ENCODE measurements at regions of chr21 and their contacts with region 1.

Region 1: DNA sequence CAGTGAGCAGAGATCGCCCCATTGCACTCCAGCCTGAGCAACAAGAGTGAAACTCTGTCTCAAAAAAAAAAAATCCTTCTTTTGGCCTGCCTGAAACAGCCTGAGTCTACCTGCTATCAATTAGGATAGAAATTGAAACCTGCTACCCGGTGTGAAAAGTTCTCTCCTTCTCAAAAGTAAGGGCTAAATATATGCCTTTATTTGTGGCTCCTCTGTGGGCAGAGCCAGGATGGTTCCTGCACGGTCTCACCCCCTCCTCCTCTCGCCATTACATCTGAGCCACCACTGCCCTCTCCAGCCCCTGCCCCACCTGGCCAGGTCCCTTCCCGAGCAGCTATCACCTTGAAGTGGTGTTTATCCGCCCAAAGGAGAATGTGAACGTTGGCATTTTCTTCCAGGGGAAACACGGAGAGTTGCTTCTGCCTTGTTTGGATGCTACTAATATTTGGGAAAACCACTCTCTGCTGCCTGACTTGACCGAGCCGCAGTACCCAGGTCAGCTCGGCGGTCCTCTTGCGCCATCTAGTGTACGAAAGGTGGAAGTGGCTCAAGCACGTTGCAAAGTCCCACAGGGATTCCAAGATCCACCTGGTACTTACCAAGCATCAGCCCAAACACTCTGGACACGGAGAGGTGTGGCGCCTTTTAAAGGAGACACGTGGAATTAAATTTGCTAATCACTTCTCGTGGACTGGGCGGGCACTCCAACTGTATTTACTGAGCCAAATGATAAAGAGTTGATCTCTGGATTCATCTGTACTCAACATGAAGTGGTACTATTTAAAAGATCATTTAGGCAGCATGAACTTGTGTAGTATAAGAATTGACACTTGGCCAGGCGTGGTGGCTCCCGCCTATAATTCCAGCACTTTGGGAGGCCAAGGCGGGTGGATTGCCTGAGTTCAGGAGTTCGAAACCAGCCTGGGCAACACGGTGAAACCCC is 31.9 kb downstream of the SETD4 start:
- DNase-seq: peak; percentile 89
- H3K4me3 ChIP-seq: no peak overlapping the region
- H3K27ac ChIP-seq: no peak overlapping the region
- H3K4me1 ChIP-seq: peaks cover 0 to 6% (median 2%) of the 10 kb centered on the region in 6 donors
- H3K27me3 ChIP-seq: no peaks in the 10 kb centered on the region
- CTCF ChIP-seq: peak; percentile 84 to 95 (median 93)
- POLR2A ChIP-seq: no peak

Region 2: GRCh38 chr21:34693192-34693810 is 1335.1 kb before region 1 on chr21:
- intact Hi-C with region 1: loop called (anchors 5 kb)
- DNase-seq: no peak
- H3K4me3 ChIP-seq: no peak overlapping the region
- H3K27ac ChIP-seq: no peak overlapping the region
- H3K4me1 ChIP-seq: peaks cover 0 to 8% (median 3%) of the 10 kb centered on the region in 6 donors
- H3K27me3 ChIP-seq: peaks cover 0 to 21% (median 0%) of the 10 kb centered on the region in 7 donors
- CTCF ChIP-seq: peak; percentile 38 to 86 (median 80)
- POLR2A ChIP-seq: no peak

Region 3: GRCh38 chr21:34745557-34746255 is 1282.7 kb before region 1 on chr21:
- intact Hi-C with region 1: loop called (anchors 10 kb)
- DNase-seq: peak; percentile 87
- H3K4me3 ChIP-seq: peak overlapping the region in 4 of 8 donors; percentile 3 to 51 (median 10)
- H3K27ac ChIP-seq: peak overlapping the region in 3 of 8 donors; percentile 6 to 35 (median 11)
- H3K4me1 ChIP-seq: peaks cover 0 to 16% (median 12%) of the 10 kb centered on the region in 6 donors
- H3K27me3 ChIP-seq: peaks cover 0 to 16% (median 0%) of the 10 kb centered on the region in 7 donors
- CTCF ChIP-seq: peak; percentile 57 to 90 (median 79)
- POLR2A ChIP-seq: no peak

Region 4: DNA sequence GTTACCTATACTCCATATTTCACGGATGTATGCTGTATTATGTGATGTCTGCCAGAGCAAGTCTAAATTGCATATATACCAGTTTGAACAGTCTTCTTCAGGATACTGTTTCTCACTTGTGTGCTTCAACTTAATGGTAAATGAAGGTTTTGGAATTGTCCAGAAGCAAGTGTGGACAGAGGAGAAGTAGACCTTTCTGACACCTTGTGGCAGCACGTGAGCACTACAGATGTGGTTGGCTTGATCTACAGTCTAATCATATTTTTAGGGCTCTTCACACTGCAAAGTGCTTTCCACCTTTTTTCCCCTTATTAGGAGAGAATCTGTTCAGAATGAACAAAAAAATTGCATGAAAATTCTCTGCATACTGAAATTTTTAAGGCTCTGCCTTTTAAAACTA is 302.5 kb after region 1 on chr21:
- intact Hi-C with region 1: no loop called
- DNase-seq: no peak
- H3K4me3 ChIP-seq: no peak overlapping the region
- H3K27ac ChIP-seq: peak overlapping the region in 6 of 8 donors; percentile 1 to 71 (median 52)
- H3K4me1 ChIP-seq: peaks cover 28 to 95% (median 61%) of the 10 kb centered on the region in 6 donors
- H3K27me3 ChIP-seq: no peaks in the 10 kb centered on the region
- CTCF ChIP-seq: peak; percentile 58 to 82 (median 73)
- POLR2A ChIP-seq: no peak

Measured in spleen (tissue), 13 donors.